PC-3 (cell line): ENCODE measurements at regions of chr6 and their contacts with region 1.

Region 1: DNA sequence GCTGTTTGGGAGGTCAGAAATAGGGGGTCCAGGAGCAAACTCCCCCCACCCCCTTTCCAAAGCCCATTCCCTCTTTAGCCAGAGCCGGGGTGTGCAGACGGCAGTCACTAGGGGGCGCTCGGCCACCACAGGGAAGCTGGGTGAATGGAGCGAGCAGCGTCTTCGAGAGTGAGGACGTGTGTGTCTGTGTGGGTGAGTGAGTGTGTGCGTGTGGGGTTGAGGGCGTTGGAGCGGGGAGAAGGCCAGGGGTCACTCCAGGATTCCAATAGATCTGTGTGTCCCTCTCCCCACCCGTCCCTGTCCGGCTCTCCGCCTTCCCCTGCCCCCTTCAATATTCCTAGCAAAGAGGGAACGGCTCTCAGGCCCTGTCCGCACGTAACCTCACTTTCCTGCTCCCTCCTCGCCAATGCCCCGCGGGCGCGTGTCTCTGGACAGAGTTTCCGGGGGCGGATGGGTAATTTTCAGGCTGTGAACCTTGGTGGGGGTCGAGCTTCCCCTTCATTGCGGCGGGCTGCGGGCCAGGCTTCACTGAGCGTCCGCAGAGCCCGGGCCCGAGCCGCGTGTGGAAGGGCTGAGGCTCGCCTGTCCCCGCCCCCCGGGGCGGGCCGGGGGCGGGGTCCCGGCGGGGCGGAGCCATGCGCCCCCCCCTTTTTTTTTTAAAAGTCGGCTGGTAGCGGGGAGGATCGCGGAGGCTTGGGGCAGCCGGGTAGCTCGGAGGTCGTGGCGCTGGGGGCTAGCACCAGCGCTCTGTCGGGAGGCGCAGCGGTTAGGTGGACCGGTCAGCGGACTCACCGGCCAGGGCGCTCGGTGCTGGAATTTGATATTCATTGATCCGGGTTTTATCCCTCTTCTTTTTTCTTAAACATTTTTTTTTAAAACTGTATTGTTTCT is at the start of gene VEGFA:
- DNase-seq: peak; percentile 87
- ATAC-seq: peak; percentile 60
- H3K4me3 ChIP-seq: peak within 1 kb of the TSS; percentile 98
- H3K27ac ChIP-seq: peak within 1 kb of the TSS; percentile 56
- H3K4me1 ChIP-seq: peaks cover 17% of the 10 kb centered on the region
- H3K27me3 ChIP-seq: no peaks in the 10 kb centered on the region
- CTCF ChIP-seq: peak; percentile 98
- total RNA-seq, gene VEGFA: 146 and 190 TPM in 2 replicates

Region 2: GRCh38 chr6:43181942-43182860 is 587.6 kb before region 1 on chr6 and contains the start of gene CUL9:
- CTCF ChIA-PET with region 1: no interaction called
- POLR2A ChIA-PET with region 1: no interaction called
- intact Hi-C with region 1: no loop called
- DNase-seq: peak; percentile 75
- ATAC-seq: peak; percentile 98
- H3K4me3 ChIP-seq: peak within 1 kb of the TSS; percentile 79
- H3K27ac ChIP-seq: peak within 1 kb of the TSS; percentile 22; the same call in 1 of the 2 replicates
- H3K4me1 ChIP-seq: peaks cover 13% of the 10 kb centered on the region
- H3K27me3 ChIP-seq: no peaks in the 10 kb centered on the region
- CTCF ChIP-seq: no peak
- total RNA-seq, gene CUL9: 30.4 and 43.8 TPM in 2 replicates

Region 3: DNA sequence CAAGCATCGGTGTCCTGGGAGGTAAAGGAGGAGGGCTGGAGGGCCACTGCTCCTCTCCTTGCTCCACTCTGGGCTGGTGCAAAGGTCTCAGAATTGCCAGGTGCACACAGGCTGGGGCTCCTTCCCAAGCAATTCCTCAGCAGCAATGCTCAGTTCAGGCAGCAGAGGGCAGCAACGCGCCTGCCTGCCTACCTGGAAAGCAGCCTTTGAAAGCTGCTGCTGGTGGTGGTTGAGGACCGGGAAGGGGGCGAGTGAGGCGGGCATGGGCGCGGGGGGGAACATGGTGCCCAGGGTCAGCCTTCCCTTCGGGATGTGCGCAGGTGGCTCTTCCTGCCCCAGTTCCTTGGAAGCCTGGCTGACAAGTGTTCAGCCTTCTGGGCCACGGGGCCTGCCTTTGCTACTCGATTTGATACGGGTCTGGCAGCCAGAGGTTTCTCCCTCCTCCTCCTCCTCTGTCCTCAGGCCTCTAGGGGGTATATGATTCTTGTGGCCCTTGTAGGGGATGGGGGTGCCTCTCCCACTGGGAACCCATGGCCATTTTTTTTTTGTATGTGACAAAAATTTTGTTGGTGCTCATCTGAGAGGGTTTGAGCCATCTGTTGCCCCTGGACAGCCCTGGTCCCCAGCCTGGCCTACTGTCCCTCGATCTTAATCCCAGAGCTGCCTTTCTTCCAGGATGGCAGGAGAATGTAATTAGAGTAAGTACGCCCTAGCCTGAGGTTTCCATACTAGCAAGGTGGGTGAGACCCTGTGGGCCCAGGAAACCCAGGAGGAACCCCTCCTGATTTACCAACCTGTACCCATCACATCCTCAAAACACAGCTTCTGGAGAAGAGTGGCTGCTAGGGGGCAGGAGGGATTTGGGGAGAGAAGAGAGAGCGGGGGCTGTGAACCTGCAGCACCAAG is 102.3 kb before region 1 on chr6:
- CTCF ChIA-PET with region 1: interaction called, 5 read pairs
- POLR2A ChIA-PET with region 1: no interaction called
- intact Hi-C with region 1: loop called (anchors 2 kb)
- DNase-seq: peak; percentile 93
- ATAC-seq: peak; percentile 57
- H3K4me3 ChIP-seq: no peak overlapping the region; the same call in 1 of the 2 replicates
- H3K27ac ChIP-seq: no peak overlapping the region
- H3K4me1 ChIP-seq: peaks cover 46% of the 10 kb centered on the region
- H3K27me3 ChIP-seq: no peaks in the 10 kb centered on the region
- CTCF ChIP-seq: peak; percentile 92

Region 4: DNA sequence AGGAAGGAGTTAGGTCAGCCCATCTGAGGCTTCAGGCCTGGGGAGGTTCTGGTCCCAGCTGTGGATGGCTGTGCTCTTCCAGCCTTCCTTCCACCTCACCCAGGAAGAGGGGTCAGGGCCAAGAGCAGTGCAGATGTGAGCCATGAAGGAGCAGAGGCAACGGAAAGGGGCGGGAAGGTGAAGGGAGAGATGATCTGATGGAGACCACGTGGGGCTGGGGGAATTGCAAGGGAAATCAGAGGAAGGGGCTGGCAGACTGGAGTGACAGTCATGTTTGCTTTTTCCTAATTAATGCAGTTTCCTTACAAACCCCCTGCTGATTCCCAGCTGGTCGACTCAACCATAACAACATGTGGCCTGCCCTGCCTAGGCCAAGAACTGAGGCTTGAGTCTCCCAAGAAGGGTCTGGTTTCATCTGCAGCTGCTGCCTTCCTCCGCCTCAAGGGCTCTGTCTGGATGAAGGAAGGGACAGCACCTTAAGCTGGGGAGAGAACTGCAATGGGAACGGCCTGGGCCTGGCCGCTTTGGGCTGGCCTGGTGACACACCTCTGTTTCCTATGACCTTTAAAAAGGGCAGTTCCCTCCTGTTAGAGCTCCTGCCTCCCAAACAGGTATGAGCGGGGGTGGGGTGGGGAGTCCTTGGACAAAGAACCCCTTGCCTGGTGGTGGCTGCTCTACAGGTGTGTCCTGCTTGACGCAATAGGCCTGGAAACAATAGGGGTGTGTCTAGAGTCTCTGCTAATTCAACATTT is 74.4 kb before region 1 on chr6:
- CTCF ChIA-PET with region 1: no interaction called
- POLR2A ChIA-PET with region 1: no interaction called
- intact Hi-C with region 1: no loop called
- DNase-seq: no peak
- ATAC-seq: no peak
- H3K4me3 ChIP-seq: no peak overlapping the region
- H3K27ac ChIP-seq: no peak overlapping the region
- H3K4me1 ChIP-seq: peaks cover 17% of the 10 kb centered on the region
- H3K27me3 ChIP-seq: no peaks in the 10 kb centered on the region
- CTCF ChIP-seq: no peak

Region 5: DNA sequence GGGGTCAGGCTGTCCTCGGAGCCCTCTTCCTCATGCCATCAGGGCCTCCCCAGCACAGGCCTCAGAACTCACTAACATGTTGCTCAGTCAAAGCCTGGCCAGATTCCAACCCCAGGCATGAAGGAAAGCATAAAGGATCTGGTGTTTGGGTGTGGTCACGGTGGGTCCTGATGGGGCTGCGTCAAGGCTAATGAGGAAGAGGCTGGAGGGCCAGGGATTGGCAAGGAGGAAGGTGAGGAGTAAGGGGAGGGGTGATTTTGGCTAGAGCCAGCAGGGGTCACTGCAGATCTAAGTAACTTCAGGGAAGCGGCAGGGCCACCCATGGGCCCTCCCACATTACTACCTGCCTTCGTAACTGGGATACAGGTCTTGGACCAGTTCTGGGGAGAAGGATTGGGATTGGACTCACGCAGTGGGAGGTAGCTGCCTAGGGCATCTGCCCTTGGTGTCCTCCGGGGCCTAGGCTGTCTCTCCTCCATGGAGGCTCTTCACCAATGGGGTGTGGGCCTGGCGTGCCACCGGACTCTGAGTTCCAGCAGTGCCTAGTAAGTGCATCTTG is 46.0 kb before region 1 on chr6:
- CTCF ChIA-PET with region 1: interaction called, 10 read pairs
- POLR2A ChIA-PET with region 1: no interaction called
- intact Hi-C with region 1: loop called (anchors 10 kb)
- DNase-seq: peak; percentile 91
- ATAC-seq: peak; percentile 79
- H3K4me3 ChIP-seq: no peak overlapping the region
- H3K27ac ChIP-seq: no peak overlapping the region
- H3K4me1 ChIP-seq: peaks cover 30% of the 10 kb centered on the region
- H3K27me3 ChIP-seq: no peaks in the 10 kb centered on the region
- CTCF ChIP-seq: peak; percentile 80

Region 6: GRCh38 chr6:43847741-43848605 is 78.2 kb after region 1 on chr6:
- CTCF ChIA-PET with region 1: interaction called, 3 read pairs
- POLR2A ChIA-PET with region 1: interaction called, 14 read pairs
- intact Hi-C with region 1: no loop called
- DNase-seq: peak; percentile 45
- ATAC-seq: no peak
- H3K4me3 ChIP-seq: no peak overlapping the region
- H3K27ac ChIP-seq: no peak overlapping the region
- H3K4me1 ChIP-seq: peaks cover 30% of the 10 kb centered on the region
- H3K27me3 ChIP-seq: no peaks in the 10 kb centered on the region
- CTCF ChIP-seq: no peak

Region 7: GRCh38 chr6:44074439-44075136 is 304.8 kb after region 1 on chr6:
- CTCF ChIA-PET with region 1: interaction called, 23 read pairs
- POLR2A ChIA-PET with region 1: interaction called, 5 read pairs
- intact Hi-C with region 1: loop called (anchors 1 kb)
- DNase-seq: peak; percentile 86
- ATAC-seq: peak; percentile 47
- H3K4me3 ChIP-seq: no peak overlapping the region
- H3K27ac ChIP-seq: peak overlapping the region; percentile 58
- H3K4me1 ChIP-seq: peaks cover 43% of the 10 kb centered on the region
- H3K27me3 ChIP-seq: no peaks in the 10 kb centered on the region
- CTCF ChIP-seq: peak; percentile 97